PC-9 (cell line): ENCODE measurements at regions of chr3 and their contacts with region 1.

Region 1: GRCh38 chr3:186617038-186617946 is 4.4 kb downstream of the AHSG start:
- DNase-seq: peak; percentile 99 to 100
- H3K4me3 ChIP-seq: peak overlapping the region; percentile 12; the same call in 1 of the 2 replicates
- H3K27ac ChIP-seq: no peak overlapping the region
- H3K4me1 ChIP-seq: peaks cover 16% of the 10 kb centered on the region
- H3K27me3 ChIP-seq: no peaks in the 10 kb centered on the region
- CTCF ChIP-seq: peak; percentile 99

Region 2: GRCh38 chr3:186193534-186194450 is 423.5 kb before region 1 on chr3:
- CTCF ChIA-PET with region 1: no interaction called
- POLR2A ChIA-PET with region 1: no interaction called
- intact Hi-C with region 1: no loop called
- DNase-seq: no peak
- H3K4me3 ChIP-seq: no peak overlapping the region
- H3K27ac ChIP-seq: no peak overlapping the region
- H3K4me1 ChIP-seq: no peaks in the 10 kb centered on the region
- H3K27me3 ChIP-seq: no peaks in the 10 kb centered on the region
- CTCF ChIP-seq: no peak

Region 3: DNA sequence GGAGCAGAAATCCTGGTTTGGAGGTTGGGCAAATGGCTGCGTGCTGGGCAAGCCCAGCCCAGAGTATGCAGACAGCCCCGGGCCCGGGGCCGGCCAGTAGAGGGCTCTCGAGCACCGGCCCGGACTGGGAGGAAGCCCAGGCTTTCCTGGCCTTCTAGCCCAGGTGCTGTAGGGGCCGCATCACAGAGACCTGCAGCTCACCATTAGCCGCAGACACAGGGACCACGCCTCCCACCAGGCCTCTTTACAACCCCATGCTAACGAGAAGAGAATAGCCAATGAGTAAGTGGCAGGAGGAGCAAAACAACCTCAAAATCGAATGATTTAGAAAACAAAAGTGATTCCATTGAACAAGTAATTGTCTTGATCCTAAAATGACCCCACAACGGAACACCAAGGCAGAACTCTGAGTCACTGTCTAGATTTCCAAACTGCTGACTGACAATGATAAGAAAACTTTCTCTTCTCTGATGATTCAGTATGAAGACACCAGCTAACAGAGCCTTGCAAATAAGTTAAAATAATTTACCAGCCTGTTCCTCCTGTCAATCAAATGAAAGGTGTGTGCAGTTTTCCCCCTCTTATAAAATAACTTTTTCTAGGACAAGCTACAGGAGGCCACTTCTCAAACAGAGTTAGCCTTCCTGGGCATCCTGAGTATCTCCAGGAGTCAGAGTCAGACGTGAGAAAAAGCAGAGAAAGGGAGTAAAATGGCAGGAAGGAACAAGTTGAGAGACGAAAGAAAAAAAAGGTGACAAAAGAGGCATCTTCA is 357.5 kb before region 1 on chr3:
- CTCF ChIA-PET with region 1: interaction called, 3 read pairs
- POLR2A ChIA-PET with region 1: no interaction called
- intact Hi-C with region 1: loop called (anchors 1 kb)
- DNase-seq: peak; percentile 73 to 81
- H3K4me3 ChIP-seq: peak overlapping the region; percentile 23; the same call in 1 of the 2 replicates
- H3K27ac ChIP-seq: no peak overlapping the region
- H3K4me1 ChIP-seq: peaks cover 6% of the 10 kb centered on the region
- H3K27me3 ChIP-seq: peaks cover 4% of the 10 kb centered on the region; the same call in 1 of the 2 replicates
- CTCF ChIP-seq: peak; percentile 93

Region 4: DNA sequence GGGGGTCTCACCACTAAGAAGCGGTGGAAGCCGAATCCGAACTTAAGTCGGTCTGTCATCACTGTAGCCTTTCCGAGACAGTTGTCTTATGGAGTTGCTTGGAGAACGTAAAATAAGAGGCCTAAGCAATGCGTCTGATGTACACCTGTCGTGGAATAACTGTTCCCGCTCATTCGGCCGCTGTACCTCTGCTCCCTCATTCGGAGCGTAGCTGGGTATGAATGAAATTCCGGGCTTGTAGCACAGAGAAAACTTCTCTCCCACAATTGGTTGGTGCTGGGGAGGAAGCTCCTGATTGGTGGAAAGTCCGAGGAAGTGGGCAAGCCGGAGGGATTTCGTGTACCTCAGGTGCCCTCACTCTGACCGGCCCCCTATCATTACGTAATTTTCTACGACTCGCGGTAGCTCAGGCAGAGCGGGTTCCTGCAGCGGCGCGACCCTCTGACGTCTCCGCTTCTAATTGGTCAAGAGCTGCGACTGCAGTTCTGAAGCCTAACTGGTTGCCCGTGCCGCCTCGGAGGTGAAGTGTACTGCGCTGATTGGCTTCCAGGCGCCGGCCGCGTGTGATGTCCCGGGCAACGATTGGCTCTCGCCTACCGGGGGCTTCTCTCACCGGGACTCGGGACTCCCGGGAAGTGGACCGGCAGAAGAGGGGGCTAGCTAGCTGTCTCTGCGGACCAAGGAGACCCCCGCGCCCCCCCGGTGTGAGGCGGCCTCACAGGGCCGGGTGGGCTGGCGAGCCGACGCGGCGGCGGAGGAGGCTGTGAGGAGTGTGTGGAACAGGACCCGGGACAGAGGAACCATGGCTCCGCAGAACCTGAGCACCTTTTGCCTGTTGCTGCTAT is 47.0 kb before region 1 on chr3 and contains the start of gene DNAJB11:
- CTCF ChIA-PET with region 1: interaction called, 6 read pairs
- POLR2A ChIA-PET with region 1: interaction called, 9 read pairs
- intact Hi-C with region 1: loop called (anchors 1 kb)
- DNase-seq: peak; percentile 99 to 100
- H3K4me3 ChIP-seq: peak within 1 kb of the TSS; percentile 80
- H3K27ac ChIP-seq: peak within 1 kb of the TSS; percentile 80
- H3K4me1 ChIP-seq: peaks cover 31% of the 10 kb centered on the region
- H3K27me3 ChIP-seq: no peaks in the 10 kb centered on the region
- CTCF ChIP-seq: no peak
- total RNA-seq, gene DNAJB11: 53.8 and 71.3 TPM in 2 replicates

Region 5: GRCh38 chr3:186644683-186645082 is 27.4 kb after region 1 on chr3:
- CTCF ChIA-PET with region 1: interaction called, 8 read pairs
- POLR2A ChIA-PET with region 1: no interaction called
- intact Hi-C with region 1: loop called (anchors 2 kb)
- DNase-seq: peak; percentile 74 to 90
- H3K4me3 ChIP-seq: no peak overlapping the region
- H3K27ac ChIP-seq: no peak overlapping the region
- H3K4me1 ChIP-seq: peaks cover 26% of the 10 kb centered on the region
- H3K27me3 ChIP-seq: no peaks in the 10 kb centered on the region
- CTCF ChIP-seq: no peak

Region 6: DNA sequence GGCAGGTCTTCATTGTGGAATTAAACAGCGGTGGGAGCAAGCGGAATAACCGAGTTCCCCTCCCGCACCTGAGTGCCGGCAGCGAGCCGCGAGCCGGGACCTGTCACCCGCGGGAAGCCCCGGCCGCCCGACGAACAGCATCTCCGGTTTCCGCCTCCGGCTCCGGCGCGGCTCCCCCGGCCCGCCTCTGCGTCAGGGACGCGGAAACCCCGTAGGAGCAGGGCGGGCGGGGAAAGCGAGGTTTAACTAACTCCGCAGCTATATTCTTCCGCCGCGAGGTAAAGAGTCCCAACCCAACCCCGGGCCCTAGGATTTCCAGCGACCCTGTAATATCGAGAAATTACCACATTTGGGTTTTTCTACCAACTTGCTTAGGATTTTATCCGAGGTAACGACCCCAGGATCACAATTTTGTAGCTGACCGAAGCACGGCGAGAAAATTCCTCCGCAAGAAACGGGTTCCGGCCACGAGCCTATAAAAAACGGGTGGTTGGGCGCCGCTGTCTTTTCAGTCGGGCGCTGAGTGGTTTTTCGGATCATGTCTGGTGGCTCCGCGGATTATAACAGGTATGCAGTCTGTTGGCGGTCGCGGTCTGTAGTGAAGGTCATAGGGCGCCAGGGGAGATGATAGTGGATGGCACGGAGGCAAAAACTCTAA is 165.9 kb after region 1 on chr3 and contains the start of gene EIF4A2:
- CTCF ChIA-PET with region 1: interaction called, 6 read pairs
- POLR2A ChIA-PET with region 1: interaction called, 8 read pairs
- intact Hi-C with region 1: loop called (anchors 1 kb)
- DNase-seq: peak; percentile 85 to 95
- H3K4me3 ChIP-seq: peak within 1 kb of the TSS; percentile 92
- H3K27ac ChIP-seq: peak within 1 kb of the TSS; percentile 93
- H3K4me1 ChIP-seq: peaks cover 34% of the 10 kb centered on the region
- H3K27me3 ChIP-seq: no peaks in the 10 kb centered on the region
- CTCF ChIP-seq: no peak
- total RNA-seq, gene EIF4A2: 446 and 618 TPM in 2 replicates

Region 7: GRCh38 chr3:186930641-186931531 is 313.6 kb after region 1 on chr3:
- CTCF ChIA-PET with region 1: no interaction called
- POLR2A ChIA-PET with region 1: no interaction called
- intact Hi-C with region 1: loop called (anchors 10 kb)
- DNase-seq: peak; percentile 65 to 71
- H3K4me3 ChIP-seq: peak overlapping the region; percentile 97
- H3K27ac ChIP-seq: no peak overlapping the region
- H3K4me1 ChIP-seq: peaks cover 12% of the 10 kb centered on the region
- H3K27me3 ChIP-seq: no peaks in the 10 kb centered on the region
- CTCF ChIP-seq: peak; percentile 29; the same call in 1 of the 2 replicates